CD8-positive, alpha-beta memory T cell (primary cell): ENCODE measurements at regions of chr19 and their contacts with region 1.

Region 1: GRCh38 chr19:51393959-51394836 is 3.8 kb upstream of the C19orf84 start:
- DNase-seq: peak; percentile 85 to 91 (median 85)
- H3K4me3 ChIP-seq: peak overlapping the region; percentile 70
- H3K4me3 Mint-ChIP-seq: peak overlapping the region; percentile 80 to 90 (median 85)
- H3K27ac ChIP-seq: peak overlapping the region; percentile 78
- H3K27ac Mint-ChIP-seq: peak overlapping the region; percentile 86 to 98 (median 94)
- H3K4me1 ChIP-seq: peaks cover 17% of the 10 kb centered on the region
- H3K4me1 Mint-ChIP-seq: peaks cover 45 to 53% (median 48%) of the 10 kb centered on the region in 3 donors
- H3K27me3 ChIP-seq: no peaks in the 10 kb centered on the region
- H3K27me3 Mint-ChIP-seq: peaks cover 0 to 2% of the 10 kb centered on the region in 2 donors

Region 2: DNA sequence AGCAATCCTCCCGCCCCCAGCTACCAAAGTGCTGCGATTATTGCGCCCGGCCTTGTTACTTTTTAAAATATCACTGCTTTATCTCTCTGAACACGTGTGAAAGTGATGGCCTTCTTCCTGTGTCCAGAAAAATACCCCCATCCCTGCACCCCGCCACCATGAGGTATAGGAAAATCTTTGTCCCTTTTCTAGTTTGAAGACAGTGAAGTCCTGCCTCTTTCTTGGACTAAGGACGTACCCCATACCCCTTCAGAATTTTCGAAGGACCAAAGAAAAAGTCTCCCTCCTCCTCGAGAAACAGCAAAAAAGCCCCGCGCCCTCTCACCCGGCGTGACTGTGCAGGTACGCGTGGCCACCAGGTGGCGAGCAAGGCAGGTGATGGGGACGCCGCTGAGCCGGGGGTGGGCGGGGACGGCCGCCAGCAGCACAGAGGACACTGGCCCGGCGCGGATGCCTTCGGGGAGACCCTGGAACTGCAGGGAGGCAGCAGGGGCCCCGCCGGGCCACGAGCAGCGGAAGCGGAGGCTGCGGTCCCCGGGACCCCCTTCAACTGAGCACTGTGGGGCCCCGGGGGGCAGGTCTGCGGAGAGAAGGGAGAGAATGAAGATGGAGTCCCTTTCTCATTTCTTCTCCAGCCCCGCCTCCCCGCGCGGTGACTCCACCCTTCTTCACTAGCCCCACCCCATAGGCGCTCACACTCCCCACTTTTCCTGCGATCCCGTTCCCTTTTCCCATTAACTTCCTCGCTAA is 55.5 kb before region 1 on chr19:
- CTCF ChIA-PET with region 1: interaction called, 10 read pairs
- POLR2A ChIA-PET with region 1: no interaction called
- DNase-seq: peak; percentile 77 to 87 (median 82)
- H3K4me3 ChIP-seq: peak overlapping the region; percentile 81
- H3K4me3 Mint-ChIP-seq: peak overlapping the region; percentile 84 to 92 (median 88)
- H3K27ac ChIP-seq: peak overlapping the region; percentile 62
- H3K27ac Mint-ChIP-seq: peak overlapping the region in 7 of 8 donors; percentile 27 to 89 (median 78)
- H3K4me1 ChIP-seq: peaks cover 15% of the 10 kb centered on the region
- H3K4me1 Mint-ChIP-seq: peaks cover 14 to 26% (median 25%) of the 10 kb centered on the region in 3 donors
- H3K27me3 ChIP-seq: no peaks in the 10 kb centered on the region
- H3K27me3 Mint-ChIP-seq: peaks cover 0 to 4% of the 10 kb centered on the region in 2 donors

Region 3: GRCh38 chr19:51367565-51368365 is 26.4 kb before region 1 on chr19:
- CTCF ChIA-PET with region 1: interaction called, 7 read pairs
- POLR2A ChIA-PET with region 1: interaction called, 18 read pairs
- DNase-seq: peak; percentile 91 to 95 (median 93)
- H3K4me3 ChIP-seq: peak overlapping the region; percentile 99
- H3K4me3 Mint-ChIP-seq: peak overlapping the region; percentile 89 to 99 (median 95)
- H3K27ac ChIP-seq: peak overlapping the region; percentile 94
- H3K27ac Mint-ChIP-seq: peak overlapping the region; percentile 93 to 100 (median 99)
- H3K4me1 ChIP-seq: peaks cover 47% of the 10 kb centered on the region
- H3K4me1 Mint-ChIP-seq: peaks cover 63 to 92% (median 74%) of the 10 kb centered on the region in 3 donors
- H3K27me3 ChIP-seq: no peaks in the 10 kb centered on the region
- H3K27me3 Mint-ChIP-seq: peaks cover 0 to 10% of the 10 kb centered on the region in 2 donors

Region 4: GRCh38 chr19:51372649-51373504 is 21.3 kb before region 1 on chr19 and contains the start of gene NKG7:
- CTCF ChIA-PET with region 1: interaction called, 7 read pairs
- POLR2A ChIA-PET with region 1: interaction called, 18 read pairs
- DNase-seq: peak; percentile 47 to 93 (median 69)
- H3K4me3 ChIP-seq: peak within 1 kb of the TSS; percentile 54
- H3K4me3 Mint-ChIP-seq: peak within 1 kb of the TSS; percentile 83 to 99 (median 95)
- H3K27ac ChIP-seq: peak within 1 kb of the TSS; percentile 76
- H3K27ac Mint-ChIP-seq: peak within 1 kb of the TSS; percentile 90 to 100 (median 98)
- H3K4me1 ChIP-seq: peaks cover 63% of the 10 kb centered on the region
- H3K4me1 Mint-ChIP-seq: peaks cover 69 to 90% (median 80%) of the 10 kb centered on the region in 3 donors
- H3K27me3 ChIP-seq: no peaks in the 10 kb centered on the region
- H3K27me3 Mint-ChIP-seq: peaks cover 0 to 3% of the 10 kb centered on the region in 2 donors
- total RNA-seq, gene NKG7: 866 to 901 TPM